ENCODE measurements at regions of chr2 and their contacts with region 1.

Region 1: DNA sequence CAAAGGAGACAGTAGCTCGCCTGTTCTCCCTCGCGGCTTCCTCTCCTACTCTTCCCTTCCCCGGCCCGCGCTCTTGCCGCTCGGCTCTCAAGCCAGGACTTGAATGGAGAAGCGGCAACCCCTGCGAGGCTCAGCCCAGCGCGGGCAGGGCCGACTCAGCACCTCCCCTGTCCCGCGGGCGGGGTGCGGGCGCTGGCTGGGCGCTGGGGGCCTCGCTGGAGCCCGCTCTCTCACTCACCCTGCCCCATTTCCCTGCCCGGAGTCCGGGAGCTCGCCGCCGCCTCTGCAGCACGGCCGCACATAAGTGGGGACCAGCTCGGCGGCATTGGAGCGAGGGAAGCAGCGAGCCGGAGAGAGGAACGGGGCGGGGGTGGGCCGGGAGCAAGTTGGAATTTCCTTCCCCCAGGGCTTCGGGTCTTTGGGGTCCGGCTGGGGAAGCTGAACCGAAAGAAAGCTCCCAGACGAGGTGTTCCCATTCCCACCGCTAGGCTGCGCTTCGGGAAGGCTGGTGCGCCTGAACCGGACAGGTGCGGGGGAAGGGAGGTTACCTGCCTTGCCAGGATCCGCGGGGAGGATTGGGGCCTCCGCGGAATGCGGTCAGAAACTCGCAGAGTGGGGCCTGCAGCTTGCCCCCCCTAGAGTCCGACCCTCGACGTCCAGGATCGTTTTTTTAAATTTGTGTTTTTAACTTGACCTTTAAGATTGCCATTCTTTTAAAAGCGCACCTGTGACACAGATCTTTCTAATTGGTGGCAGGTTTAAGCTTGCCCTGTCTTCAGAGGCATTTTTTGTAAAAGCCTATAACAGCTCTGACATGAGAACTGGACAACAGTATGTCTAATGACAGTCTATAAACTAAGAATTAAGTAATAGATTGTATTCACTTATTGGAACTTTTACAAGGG is at the start of gene COBLL1:
- DNase-seq: peak; percentile 47
- H3K4me3 Mint-ChIP-seq: peak within 1 kb of the TSS; percentile 68
- H3K27ac Mint-ChIP-seq: no peak within 1 kb of the TSS
- H3K4me1 Mint-ChIP-seq: peaks cover 5% of the 10 kb centered on the region
- H3K27me3 Mint-ChIP-seq: peaks cover 31% of the 10 kb centered on the region
- total RNA-seq, gene COBLL1: not detected

Region 2: DNA sequence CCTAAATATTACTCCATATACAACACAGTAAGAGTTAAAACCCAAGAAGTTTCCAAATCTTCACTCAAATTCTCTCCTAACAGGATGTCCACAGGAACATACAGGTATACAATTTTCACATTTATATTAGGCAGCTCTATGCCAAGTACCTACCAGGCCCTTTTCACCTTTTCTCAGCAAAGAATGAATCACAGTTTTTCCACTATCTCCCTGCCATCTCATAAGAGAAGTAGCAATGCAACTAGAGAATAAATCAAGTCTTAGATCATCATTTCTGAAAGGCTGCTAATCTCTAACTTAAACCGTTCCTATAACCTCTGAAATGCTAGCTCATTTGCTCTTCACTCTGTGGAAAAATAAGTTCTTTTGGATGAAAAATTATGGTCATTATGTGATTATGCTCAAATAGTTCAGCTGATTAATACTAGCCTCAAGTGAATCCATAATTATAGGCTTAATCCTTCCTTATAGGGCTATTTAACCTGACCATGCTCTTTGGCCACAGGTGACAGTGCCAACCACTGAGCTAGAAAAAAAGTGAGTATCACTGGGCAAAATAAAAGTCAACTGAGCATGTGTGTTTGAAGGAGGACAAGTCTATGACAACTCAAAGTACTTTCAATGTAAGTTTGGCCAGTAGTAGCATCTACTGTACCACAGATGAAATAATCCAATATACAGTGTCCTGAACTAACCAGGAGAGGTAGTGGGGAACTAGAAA is 80.1 kb before region 1 on chr2:
- CTCF ChIA-PET with region 1: interaction called, 3 read pairs
- intact Hi-C with region 1: loop called (anchors 5 kb)
- DNase-seq: no peak
- H3K4me3 Mint-ChIP-seq: no peak overlapping the region
- H3K27ac Mint-ChIP-seq: no peak overlapping the region
- H3K4me1 Mint-ChIP-seq: peaks cover 5% of the 10 kb centered on the region
- H3K27me3 Mint-ChIP-seq: no peaks in the 10 kb centered on the region

Region 3: DNA sequence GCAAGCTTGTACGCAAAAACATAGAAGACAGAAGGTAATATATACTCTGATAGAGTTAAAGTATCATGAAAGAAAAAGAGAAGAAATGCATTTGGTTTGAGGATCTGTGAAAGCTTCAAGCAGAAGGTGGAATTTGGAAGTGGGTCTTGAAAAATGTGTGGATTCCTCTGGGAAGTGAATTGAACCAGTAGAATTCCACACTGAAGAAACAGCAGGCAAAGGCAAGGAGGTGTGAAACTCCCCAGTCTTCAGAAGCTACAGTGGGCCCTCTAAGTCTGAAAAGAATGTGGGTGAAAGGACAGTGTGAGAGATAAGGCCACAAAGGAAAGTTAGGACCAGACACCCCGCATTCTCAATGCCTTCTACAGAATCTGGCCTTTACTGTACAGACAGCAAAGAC is 25.9 kb before region 1 on chr2:
- CTCF ChIA-PET with region 1: no interaction called
- intact Hi-C with region 1: no loop called
- DNase-seq: no peak
- H3K4me3 Mint-ChIP-seq: no peak overlapping the region
- H3K27ac Mint-ChIP-seq: no peak overlapping the region
- H3K4me1 Mint-ChIP-seq: no peaks in the 10 kb centered on the region
- H3K27me3 Mint-ChIP-seq: no peaks in the 10 kb centered on the region

Region 4: DNA sequence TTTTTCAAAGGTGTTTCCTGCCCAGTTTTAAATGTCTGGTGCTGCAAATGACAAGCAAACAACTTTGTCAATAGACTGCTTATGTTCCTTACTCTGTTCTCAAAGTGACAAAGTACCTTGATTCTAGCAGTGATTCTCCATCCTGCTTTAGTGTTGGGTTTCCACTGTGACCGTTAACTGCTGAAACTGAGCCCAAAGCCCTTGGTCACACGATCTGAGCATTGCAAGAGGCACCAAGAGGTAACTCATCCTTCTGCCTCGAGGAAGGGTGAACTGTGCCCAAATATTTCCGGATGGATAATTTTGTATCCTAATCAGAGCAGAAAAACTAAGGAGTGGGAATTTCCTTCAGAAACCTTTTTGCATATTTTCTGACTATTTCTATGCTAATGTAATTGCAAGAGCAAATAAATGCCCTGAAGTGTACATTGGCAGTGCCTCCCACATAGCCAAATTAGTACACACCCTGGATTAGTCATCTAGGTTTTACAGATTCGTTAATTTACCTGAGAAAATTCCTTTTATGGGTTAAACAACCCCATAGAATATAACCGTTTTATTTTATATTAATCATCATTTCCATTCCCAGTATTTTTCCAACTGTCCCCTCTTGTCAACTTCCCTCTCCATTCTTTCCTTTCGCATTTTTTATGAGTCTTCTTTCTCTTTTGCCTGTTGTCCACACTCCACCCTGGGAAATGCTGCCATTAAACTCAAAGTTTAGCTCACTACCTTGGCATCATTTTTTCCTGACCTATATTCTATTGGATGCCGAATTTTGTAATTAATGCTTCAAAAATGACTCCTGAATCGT is 31.3 kb after region 1 on chr2:
- CTCF ChIA-PET with region 1: no interaction called
- intact Hi-C with region 1: no loop called
- DNase-seq: no peak
- H3K4me3 Mint-ChIP-seq: no peak overlapping the region
- H3K27ac Mint-ChIP-seq: no peak overlapping the region
- H3K4me1 Mint-ChIP-seq: no peaks in the 10 kb centered on the region
- H3K27me3 Mint-ChIP-seq: peaks cover 4% of the 10 kb centered on the region

Measured in activated naive CD4-positive, alpha-beta T cell treated with anti-CD3 and anti-CD28 coated beads for 36 hours (primary cell).